ENCODE measurements at regions of chr15 and their contacts with region 1.

Region 1: GRCh38 chr15:81421461-81421860 is 47.4 kb upstream of the TMC3 start:
- DNase-seq: no peak
- ATAC-seq: no peak

Region 2: GRCh38 chr15:81023483-81024264 is 397.8 kb before region 1 on chr15:
- intact Hi-C with region 1: no loop called
- DNase-seq: peak; percentile 86
- ATAC-seq: peak; percentile 99

Region 3: DNA sequence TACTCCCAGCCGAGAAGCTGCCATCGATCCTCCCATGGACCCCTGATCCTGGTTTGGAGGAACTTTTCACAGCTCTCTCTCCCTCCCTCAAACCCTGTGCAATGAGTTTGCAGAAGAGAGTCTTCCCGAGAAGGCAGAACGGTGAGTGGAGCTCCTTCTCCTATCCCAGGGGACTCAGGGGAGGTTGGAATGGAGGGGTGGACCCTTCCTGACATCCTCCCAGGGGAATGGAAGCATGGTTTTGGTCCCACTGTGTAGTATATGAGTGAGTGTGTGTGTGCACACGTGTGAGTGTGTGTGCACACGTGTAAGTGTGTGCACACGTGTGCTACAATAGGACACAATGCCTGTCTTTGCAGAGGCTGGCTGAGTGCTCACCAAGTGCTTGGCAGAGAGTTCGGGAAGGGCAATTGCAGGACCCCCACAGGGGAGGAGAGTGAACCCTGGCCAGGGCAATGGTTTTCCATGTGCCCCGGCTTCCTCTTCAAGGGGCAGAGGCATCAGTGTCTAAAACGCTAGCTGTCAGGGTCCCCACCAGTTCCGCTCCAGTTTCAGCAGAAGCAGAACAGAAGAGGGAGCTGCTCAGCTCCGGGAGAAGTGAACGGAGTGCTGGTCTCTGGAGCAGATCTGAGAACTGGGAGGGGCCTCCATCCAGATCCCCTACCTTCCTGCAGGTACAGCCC is 238.6 kb before region 1 on chr15:
- intact Hi-C with region 1: no loop called
- DNase-seq: no peak
- ATAC-seq: peak; percentile 84

Region 4: GRCh38 chr15:81312790-81313543 is 108.5 kb before region 1 on chr15:
- intact Hi-C with region 1: no loop called
- DNase-seq: peak; percentile 75
- ATAC-seq: peak; percentile 88

Region 5: DNA sequence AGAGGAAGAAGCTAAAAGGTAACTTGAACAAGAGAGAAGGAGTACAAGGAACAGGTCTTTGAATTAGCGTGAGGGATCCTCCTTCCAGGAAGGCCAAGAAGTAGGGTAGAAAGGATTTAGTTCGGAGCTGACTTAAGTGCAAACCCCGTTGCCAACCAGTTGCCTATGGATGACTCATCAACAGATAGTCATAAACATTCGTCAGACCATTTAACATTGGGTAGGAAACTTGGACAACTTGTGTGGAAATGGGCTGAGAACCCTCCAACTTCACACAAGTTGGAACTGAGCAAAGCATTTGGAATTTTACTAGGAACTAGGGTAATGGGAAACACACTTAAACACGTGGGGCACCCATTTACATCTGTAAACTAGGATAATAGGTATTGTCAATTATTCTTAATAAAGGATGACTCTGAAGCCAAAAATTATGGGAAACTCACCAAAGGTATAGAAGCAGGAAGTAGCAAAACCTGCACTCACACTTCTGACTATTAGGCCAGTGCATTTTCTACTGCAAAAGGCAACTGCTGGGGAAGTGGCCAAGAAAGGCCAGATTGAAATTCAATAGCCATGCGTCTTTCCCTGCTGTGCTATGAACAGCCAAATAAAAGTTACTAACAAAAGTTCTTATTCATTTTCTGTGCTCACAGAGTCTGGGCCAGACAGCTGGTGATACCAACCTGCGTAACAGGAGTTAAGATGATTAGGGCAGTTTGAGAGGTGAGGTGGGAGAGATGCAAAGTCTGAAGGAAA is 127.1 kb after region 1 on chr15:
- intact Hi-C with region 1: loop called (anchors 5 kb)
- DNase-seq: no peak
- ATAC-seq: no peak